ENCODE measurements at regions of chr3 and their contacts with region 1.

Region 1: DNA sequence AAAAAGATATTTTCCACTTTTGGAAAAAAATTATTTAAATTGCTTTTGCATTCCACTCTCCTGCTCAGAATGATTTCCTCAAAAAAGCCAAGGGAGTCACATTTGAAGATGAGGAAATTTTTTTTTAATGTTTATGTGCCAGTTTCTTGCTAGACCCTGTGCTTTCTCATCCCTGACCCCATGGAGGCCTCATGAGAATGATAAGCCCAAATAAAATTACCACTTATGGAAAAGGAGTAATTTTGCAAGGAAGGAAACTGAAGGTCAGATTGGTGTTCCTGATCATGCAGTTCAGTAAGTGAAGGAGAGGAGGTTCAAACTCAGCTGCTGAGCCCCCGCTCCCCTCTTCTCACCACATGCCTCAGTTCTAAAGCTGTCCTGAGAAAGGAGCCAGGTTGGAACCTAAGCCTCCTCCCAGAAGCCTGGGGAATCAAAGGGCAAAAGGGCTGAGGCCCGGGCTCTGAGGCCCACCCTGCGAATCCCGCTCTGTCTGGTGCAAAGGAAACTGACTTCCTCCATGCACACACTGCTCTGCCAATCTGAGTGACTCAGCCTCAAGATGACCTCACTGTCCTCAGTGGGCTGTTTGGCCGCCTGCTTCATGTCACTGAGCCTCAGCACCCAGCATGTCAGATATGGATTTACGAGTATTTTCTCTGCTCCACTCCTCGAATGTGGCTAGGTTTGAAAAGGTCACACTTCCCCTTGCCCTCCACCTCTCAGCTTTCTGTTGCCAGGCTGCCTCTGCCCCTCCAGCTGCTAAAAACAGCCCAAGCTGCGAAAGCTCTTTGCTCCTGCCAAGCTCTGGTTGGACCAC is 56.9 kb upstream of the FLNB start:
- DNase-seq: peak; percentile 95
- H3K4me3 ChIP-seq: peak overlapping the region in 1 of 3 experiments; percentile 6
- H3K27ac ChIP-seq: peak overlapping the region; percentile 98
- H3K4me1 ChIP-seq: peaks cover 43% of the 10 kb centered on the region
- H3K27me3 ChIP-seq: no peaks in the 10 kb centered on the region
- CTCF ChIP-seq: no peak
- POLR2A ChIP-seq: no peak

Region 2: GRCh38 chr3:57877116-57877515 is 74.2 kb before region 1 on chr3:
- CTCF ChIA-PET with region 1: no interaction called
- POLR2A ChIA-PET with region 1: no interaction called
- dilution Hi-C with region 1: no loop called
- intact Hi-C with region 1: no loop called
- DNase-seq: no peak
- H3K4me3 ChIP-seq: no peak overlapping the region
- H3K27ac ChIP-seq: no peak overlapping the region
- H3K4me1 ChIP-seq: no peaks in the 10 kb centered on the region
- H3K27me3 ChIP-seq: no peaks in the 10 kb centered on the region
- CTCF ChIP-seq: no peak
- POLR2A ChIP-seq: no peak

Region 3: DNA sequence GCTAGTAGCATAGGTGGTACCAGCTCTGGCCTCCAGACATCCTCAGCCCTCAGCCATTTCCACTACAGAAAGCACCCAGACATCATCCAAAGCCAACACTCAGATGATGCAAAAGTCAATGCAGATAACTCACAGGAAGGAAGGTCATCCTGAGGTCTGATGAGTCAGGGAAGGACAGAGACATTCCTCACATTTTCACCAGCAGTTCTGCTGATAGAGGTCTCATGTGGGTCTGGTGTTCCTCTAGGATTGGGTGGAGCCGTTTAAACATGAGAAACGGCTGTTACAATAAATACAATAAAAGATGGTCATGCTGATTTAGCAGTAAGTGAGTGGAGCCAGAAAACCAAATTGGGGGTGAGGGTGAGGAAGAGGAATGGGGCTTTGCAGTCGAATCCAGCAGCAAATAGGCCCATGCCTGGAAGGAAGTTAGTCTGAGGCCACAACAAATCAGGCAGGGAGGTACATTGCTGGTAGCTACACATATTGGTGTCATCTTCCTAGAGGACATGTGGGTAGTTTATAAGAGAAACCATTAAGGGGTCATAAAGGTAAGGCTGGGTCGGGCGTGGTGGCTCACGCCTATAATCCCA is 23.6 kb after region 1 on chr3:
- CTCF ChIA-PET with region 1: interaction called, 6 read pairs
- POLR2A ChIA-PET with region 1: interaction called, 8 read pairs
- dilution Hi-C with region 1: no loop called
- intact Hi-C with region 1: loop called (anchors 1 kb)
- DNase-seq: peak; percentile 86
- H3K4me3 ChIP-seq: no peak overlapping the region
- H3K27ac ChIP-seq: peak overlapping the region; percentile 94
- H3K4me1 ChIP-seq: peaks cover 47% of the 10 kb centered on the region
- H3K27me3 ChIP-seq: no peaks in the 10 kb centered on the region
- CTCF ChIP-seq: no peak
- POLR2A ChIP-seq: no peak

Region 4: GRCh38 chr3:58049143-58049785 is 98.0 kb after region 1 on chr3:
- CTCF ChIA-PET with region 1: no interaction called
- POLR2A ChIA-PET with region 1: no interaction called
- dilution Hi-C with region 1: loop called (anchors 25 kb)
- intact Hi-C with region 1: loop called (anchors 2 kb)
- DNase-seq: peak; percentile 91
- H3K4me3 ChIP-seq: peak overlapping the region in 1 of 3 experiments; percentile 31
- H3K27ac ChIP-seq: peak overlapping the region; percentile 98
- H3K4me1 ChIP-seq: peaks cover 85% of the 10 kb centered on the region
- H3K27me3 ChIP-seq: no peaks in the 10 kb centered on the region
- CTCF ChIP-seq: no peak
- POLR2A ChIP-seq: peak; percentile 49

Region 5: GRCh38 chr3:58116161-58116955 is 165.1 kb after region 1 on chr3:
- CTCF ChIA-PET with region 1: interaction called, 5 read pairs
- POLR2A ChIA-PET with region 1: no interaction called
- dilution Hi-C with region 1: no loop called
- intact Hi-C with region 1: loop called (anchors 2 kb)
- DNase-seq: peak; percentile 31
- H3K4me3 ChIP-seq: no peak overlapping the region
- H3K27ac ChIP-seq: peak overlapping the region; percentile 83
- H3K4me1 ChIP-seq: peaks cover 67% of the 10 kb centered on the region
- H3K27me3 ChIP-seq: no peaks in the 10 kb centered on the region
- CTCF ChIP-seq: no peak
- POLR2A ChIP-seq: no peak